ENCODE measurements at regions of chr1 and their contacts with region 1.

Region 1: GRCh38 chr1:52002038-52002917 is 11.8 kb upstream of the RAB3B start:
- DNase-seq: peak; percentile 89
- H3K4me3 Mint-ChIP-seq: no peak overlapping the region
- H3K27ac Mint-ChIP-seq: no peak overlapping the region
- H3K4me1 Mint-ChIP-seq: no peaks in the 10 kb centered on the region
- H3K27me3 Mint-ChIP-seq: no peaks in the 10 kb centered on the region
- CTCF ChIP-seq: peak; percentile 90

Region 2: GRCh38 chr1:51627678-51628077 is 374.6 kb before region 1 on chr1:
- CTCF ChIA-PET with region 1: interaction called, 7 read pairs
- POLR2A ChIA-PET with region 1: no interaction called
- intact Hi-C with region 1: loop called (anchors 1 kb)
- DNase-seq: peak; percentile 69
- H3K4me3 Mint-ChIP-seq: no peak overlapping the region
- H3K27ac Mint-ChIP-seq: no peak overlapping the region
- H3K4me1 Mint-ChIP-seq: peaks cover 12% of the 10 kb centered on the region
- H3K27me3 Mint-ChIP-seq: no peaks in the 10 kb centered on the region
- CTCF ChIP-seq: peak; percentile 51

Region 3: GRCh38 chr1:51981556-51981955 is 20.7 kb before region 1 on chr1:
- CTCF ChIA-PET with region 1: interaction called, 11 read pairs
- POLR2A ChIA-PET with region 1: interaction called, 4 read pairs
- intact Hi-C with region 1: no loop called
- DNase-seq: no peak
- H3K4me3 Mint-ChIP-seq: no peak overlapping the region
- H3K27ac Mint-ChIP-seq: no peak overlapping the region
- H3K4me1 Mint-ChIP-seq: no peaks in the 10 kb centered on the region
- H3K27me3 Mint-ChIP-seq: no peaks in the 10 kb centered on the region
- CTCF ChIP-seq: no peak

Region 4: GRCh38 chr1:52141513-52142219 is 139.4 kb after region 1 on chr1 and contains the start of gene ZFYVE9:
- CTCF ChIA-PET with region 1: no interaction called
- POLR2A ChIA-PET with region 1: no interaction called
- intact Hi-C with region 1: no loop called
- DNase-seq: peak; percentile 76
- H3K4me3 Mint-ChIP-seq: peak within 1 kb of the TSS; percentile 86
- H3K27ac Mint-ChIP-seq: peak within 1 kb of the TSS; percentile 95
- H3K4me1 Mint-ChIP-seq: peaks cover 29% of the 10 kb centered on the region
- H3K27me3 Mint-ChIP-seq: no peaks in the 10 kb centered on the region
- CTCF ChIP-seq: peak; percentile 78
- total RNA-seq, gene ZFYVE9: 21.9 and 23.9 TPM in 2 replicates

Region 5: GRCh38 chr1:52216907-52217458 is 214.7 kb after region 1 on chr1:
- CTCF ChIA-PET with region 1: no interaction called
- POLR2A ChIA-PET with region 1: no interaction called
- intact Hi-C with region 1: no loop called
- DNase-seq: no peak
- H3K4me3 Mint-ChIP-seq: no peak overlapping the region
- H3K27ac Mint-ChIP-seq: no peak overlapping the region
- H3K4me1 Mint-ChIP-seq: no peaks in the 10 kb centered on the region
- H3K27me3 Mint-ChIP-seq: no peaks in the 10 kb centered on the region
- CTCF ChIP-seq: no peak